Heart right ventricle (tissue), 16 donors: ENCODE measurements at regions of chr11 and their contacts with region 1.

Region 1: DNA sequence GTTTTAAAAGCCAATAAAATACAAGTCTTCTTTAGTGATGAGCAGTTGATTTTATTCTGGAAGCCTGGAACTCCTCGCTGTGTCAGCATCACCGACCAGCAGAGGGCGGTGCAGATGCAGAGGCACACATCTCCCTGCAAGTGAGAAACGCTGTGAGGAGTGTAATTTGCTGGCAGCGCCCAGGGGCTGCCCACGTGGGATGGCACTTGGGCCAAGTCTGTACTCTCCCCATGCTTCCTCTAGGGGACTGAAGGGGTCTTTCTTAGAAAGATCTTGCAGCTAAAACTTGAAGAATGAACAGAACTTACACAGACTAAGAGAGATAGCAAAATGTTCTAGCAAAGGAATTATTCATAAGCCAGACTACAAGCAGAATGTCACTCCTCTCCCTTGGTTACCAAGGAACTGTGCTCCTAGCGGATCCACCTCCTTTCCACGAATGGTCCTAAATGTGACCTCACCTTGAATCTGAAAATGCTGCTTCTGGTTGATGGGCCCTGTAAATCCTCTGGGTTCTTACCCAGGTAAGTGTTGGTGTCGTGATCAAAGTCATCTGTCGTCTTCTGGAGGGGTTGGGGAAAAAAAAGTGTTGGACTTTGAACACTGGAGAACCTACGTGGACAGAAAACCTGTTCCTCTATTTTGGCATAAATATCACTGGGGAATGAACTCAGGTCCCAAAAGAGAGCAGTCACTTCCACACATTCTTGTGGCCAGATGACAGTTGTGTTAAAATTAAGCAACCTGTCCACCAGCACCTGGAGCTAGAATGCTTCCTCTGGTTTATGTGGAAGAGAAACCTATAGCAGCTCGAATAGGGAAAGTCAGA is 31.8 kb downstream of the CNTF start:
- DNase-seq: peak; percentile 63 to 80
- ATAC-seq: peak; percentile 77 to 95 (median 86)
- H3K4me3 ChIP-seq: no peak overlapping the region
- H3K27ac ChIP-seq: no peak overlapping the region
- H3K4me1 ChIP-seq: peaks cover 0 to 30% (median 4%) of the 10 kb centered on the region in 9 donors
- H3K27me3 ChIP-seq: no peaks in the 10 kb centered on the region
- CTCF ChIP-seq: peak; percentile 79 to 94 (median 90)

Region 2: GRCh38 chr11:58222721-58223120 is 431.6 kb before region 1 on chr11:
- intact Hi-C with region 1: no loop called
- DNase-seq: no peak
- ATAC-seq: no peak
- H3K4me3 ChIP-seq: no peak overlapping the region
- H3K27ac ChIP-seq: no peak overlapping the region
- H3K4me1 ChIP-seq: no peaks in the 10 kb centered on the region
- H3K27me3 ChIP-seq: no peaks in the 10 kb centered on the region
- CTCF ChIP-seq: no peak

Region 3: GRCh38 chr11:58354727-58355126 is 299.6 kb before region 1 on chr11:
- intact Hi-C with region 1: no loop called
- DNase-seq: no peak
- ATAC-seq: no peak
- H3K4me3 ChIP-seq: no peak overlapping the region
- H3K27ac ChIP-seq: no peak overlapping the region
- H3K4me1 ChIP-seq: no peaks in the 10 kb centered on the region
- H3K27me3 ChIP-seq: no peaks in the 10 kb centered on the region
- CTCF ChIP-seq: no peak

Region 4: GRCh38 chr11:58616594-58616993 is 37.7 kb before region 1 on chr11:
- intact Hi-C with region 1: no loop called
- DNase-seq: peak in 1 of 2 donors; percentile 30
- ATAC-seq: peak in 6 of 8 donors; percentile 43 to 85 (median 52)
- H3K4me3 ChIP-seq: no peak overlapping the region
- H3K27ac ChIP-seq: peak overlapping the region in 2 of 10 donors; percentile 5 to 68
- H3K4me1 ChIP-seq: peaks cover 5 to 37% (median 21%) of the 10 kb centered on the region in 9 donors
- H3K27me3 ChIP-seq: no peaks in the 10 kb centered on the region
- CTCF ChIP-seq: no peak

Region 5: GRCh38 chr11:58675334-58676155 is 21.3 kb after region 1 on chr11:
- intact Hi-C with region 1: loop called in 1 of 10 experiments (anchors 2 kb)
- DNase-seq: peak; percentile 62 to 81
- ATAC-seq: peak; percentile 83 to 94 (median 90)
- H3K4me3 ChIP-seq: no peak overlapping the region
- H3K27ac ChIP-seq: no peak overlapping the region
- H3K4me1 ChIP-seq: no peaks in the 10 kb centered on the region
- H3K27me3 ChIP-seq: peaks cover 0 to 24% (median 14%) of the 10 kb centered on the region in 7 donors
- CTCF ChIP-seq: peak; percentile 73 to 97 (median 94)

Region 6: DNA sequence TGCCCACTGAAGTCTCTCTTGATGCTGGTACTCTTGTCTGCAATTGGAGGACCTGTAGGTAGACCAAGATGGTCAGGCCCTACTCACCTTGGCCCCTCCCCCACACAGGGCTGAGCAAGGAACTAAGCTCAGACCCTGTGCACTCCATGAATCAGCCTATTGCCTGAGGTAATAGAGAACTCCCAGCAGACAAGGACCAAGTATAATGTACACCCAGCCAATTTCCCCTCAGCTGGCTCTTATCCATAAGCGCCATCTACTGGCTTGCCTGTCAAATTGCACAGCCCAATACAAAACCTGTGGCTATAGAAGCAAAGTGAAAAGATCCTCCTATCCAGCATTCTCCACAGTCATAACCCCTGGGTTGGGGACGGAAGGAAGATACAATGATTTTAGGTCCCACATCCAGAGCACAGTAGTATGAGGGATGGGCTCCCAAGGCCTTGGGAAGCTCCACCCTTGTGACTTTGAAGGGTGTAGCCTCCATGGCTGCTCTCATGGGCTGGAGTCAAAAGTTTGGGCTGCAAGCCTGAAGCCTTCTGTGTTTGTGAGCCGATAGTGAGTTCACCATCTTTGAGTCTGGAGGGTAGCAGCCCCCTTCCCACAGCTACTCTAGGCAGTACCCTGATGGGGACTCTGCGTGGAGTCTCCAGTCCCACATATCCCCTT is 134.2 kb after region 1 on chr11:
- intact Hi-C with region 1: loop called in 2 of 10 experiments (anchors 5 to 10 kb)
- DNase-seq: peak in 1 of 2 donors; percentile 8
- ATAC-seq: peak in 7 of 8 donors; percentile 34 to 76 (median 53)
- H3K4me3 ChIP-seq: no peak overlapping the region
- H3K27ac ChIP-seq: no peak overlapping the region
- H3K4me1 ChIP-seq: no peaks in the 10 kb centered on the region
- H3K27me3 ChIP-seq: peaks cover 0 to 14% (median 0%) of the 10 kb centered on the region in 7 donors
- CTCF ChIP-seq: peak; percentile 31 to 79 (median 63)

Region 7: DNA sequence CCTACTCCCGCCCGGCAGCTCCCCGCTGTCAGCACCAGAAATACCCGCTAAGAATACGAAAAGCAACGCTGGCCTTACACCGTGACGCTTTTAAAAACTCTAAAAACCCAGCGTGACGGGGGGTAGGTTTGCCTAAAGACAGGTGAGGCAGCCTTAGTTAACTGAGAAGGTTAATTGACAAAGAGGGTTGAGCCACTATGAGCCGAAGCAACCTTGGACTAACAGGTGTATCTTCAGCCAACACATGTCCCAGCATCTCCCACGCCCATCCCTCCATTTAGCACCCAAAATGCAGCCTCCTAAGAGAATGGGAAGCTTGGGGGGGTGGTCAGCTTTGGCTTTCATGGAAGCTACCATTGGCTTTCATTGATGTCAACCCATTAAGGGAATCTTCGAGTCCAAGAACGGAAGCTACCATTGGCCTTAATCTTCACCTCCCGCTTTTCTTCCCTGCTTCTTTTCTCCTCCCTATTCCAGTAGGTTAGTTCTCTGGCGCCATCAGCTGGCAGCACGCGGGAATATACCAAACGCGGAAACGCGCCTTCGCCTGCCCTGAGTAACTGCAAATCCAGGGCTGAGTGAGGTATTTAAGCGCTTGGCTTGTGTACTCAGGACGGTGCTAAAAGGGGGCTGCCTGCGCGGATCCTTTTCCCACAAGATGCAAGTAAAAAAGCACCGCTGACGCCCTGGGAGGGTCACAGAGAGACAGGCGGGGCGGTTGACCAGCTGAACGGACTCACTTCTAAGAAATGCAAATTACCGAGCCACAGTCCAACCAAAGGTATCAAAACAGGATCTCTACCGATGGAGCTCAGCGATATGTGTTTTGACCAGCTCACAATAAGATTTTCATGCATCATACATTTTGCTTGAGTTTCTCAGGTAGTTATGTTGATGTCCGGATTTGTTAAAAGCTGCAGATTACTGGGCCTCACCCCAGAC is 246.5 kb after region 1 on chr11:
- intact Hi-C with region 1: loop called in 3 of 10 experiments (anchors 10 kb)
- DNase-seq: peak; percentile 57 to 64
- ATAC-seq: peak in 5 of 8 donors; percentile 28 to 74 (median 55)
- H3K4me3 ChIP-seq: no peak overlapping the region
- H3K27ac ChIP-seq: no peak overlapping the region
- H3K4me1 ChIP-seq: peaks cover 0 to 9% (median 0%) of the 10 kb centered on the region in 9 donors
- H3K27me3 ChIP-seq: peaks cover 0 to 67% (median 50%) of the 10 kb centered on the region in 7 donors
- CTCF ChIP-seq: peak in 8 of 9 donors; percentile 19 to 58 (median 50)

Region 8: DNA sequence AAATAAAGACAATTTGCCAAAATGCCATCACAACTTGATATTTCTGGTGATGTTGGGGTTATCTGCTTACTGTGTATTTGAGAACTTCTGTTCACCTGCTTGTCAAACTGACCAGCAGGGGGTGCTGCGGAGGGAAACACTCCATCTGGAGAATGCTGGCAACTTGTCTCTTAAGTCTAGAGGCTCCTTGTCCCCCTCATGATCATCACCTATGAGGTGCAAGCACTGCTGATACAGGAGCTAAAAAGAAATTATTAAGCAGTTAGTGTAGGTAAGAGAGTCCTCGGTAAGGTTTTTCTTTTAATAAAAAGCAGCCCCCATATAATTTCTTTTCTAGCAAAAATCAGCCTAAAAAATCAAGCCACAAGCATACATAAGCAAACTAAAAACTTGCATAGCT is 399.1 kb after region 1 on chr11:
- intact Hi-C with region 1: loop called in 1 of 10 experiments (anchors 10 kb)
- DNase-seq: peak; percentile 51 to 57
- ATAC-seq: no peak
- H3K4me3 ChIP-seq: no peak overlapping the region
- H3K27ac ChIP-seq: no peak overlapping the region
- H3K4me1 ChIP-seq: peaks cover 0 to 3% (median 0%) of the 10 kb centered on the region in 9 donors
- H3K27me3 ChIP-seq: peaks cover 0 to 38% (median 19%) of the 10 kb centered on the region in 7 donors
- CTCF ChIP-seq: peak; percentile 25 to 85 (median 69)

Region 9: DNA sequence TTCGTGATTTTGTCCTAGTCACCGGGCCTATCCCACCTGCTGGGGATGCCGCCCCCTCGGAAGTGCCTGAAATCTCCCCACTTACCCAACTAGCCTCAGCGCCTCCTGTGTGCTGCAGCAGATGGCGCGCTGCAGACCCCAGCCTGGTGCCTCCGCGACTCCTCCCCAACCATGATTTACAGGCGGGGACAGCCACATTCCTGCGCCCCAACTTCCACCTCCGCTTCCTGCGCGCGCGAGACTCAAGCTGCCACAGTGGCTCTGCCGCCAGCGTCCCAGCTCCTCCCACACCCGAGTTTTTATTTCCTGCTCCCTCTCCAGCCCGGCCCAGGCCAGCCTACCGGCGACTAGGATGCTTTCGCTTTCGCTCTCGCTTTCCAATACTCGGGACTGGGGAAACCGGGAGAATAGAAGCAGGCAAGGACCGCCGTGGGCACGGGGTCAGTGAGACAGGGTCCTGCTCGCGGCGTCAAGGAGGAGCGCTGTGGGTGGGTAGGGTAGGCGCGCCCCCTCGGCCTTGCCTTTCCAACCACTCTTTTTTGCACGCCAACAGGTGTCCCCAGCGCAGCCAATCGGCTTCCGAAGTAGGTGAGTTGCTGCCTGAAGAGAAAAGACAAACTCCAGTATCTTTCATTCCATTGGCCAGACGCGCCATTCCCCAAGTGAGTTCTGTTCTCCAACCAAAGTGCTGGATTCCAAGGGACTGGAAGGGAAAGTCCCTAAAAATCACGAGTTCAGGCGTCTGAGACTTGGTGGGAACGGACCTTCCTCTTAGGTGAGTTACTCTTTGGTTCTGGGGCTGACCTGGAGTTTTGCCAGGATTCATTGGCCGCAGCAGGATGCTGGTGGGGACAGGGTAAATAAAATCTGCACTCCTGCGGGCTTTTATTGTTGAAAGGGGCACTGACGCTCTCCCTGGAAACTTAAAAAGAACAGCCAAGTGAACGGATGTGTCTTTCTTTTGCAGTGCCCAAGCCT is 488.5 kb after region 1 on chr11 and contains the start of gene FAM111A:
- intact Hi-C with region 1: loop called in 1 of 10 experiments (anchors 10 kb)
- DNase-seq: peak; percentile 86 to 90
- ATAC-seq: peak; percentile 93 to 97 (median 96)
- H3K4me3 ChIP-seq: peak within 1 kb of the TSS; percentile 20 to 86 (median 70)
- H3K27ac ChIP-seq: peak within 1 kb of the TSS; percentile 44 to 94 (median 87)
- H3K4me1 ChIP-seq: peaks cover 0 to 48% (median 25%) of the 10 kb centered on the region in 9 donors
- H3K27me3 ChIP-seq: no peaks in the 10 kb centered on the region
- CTCF ChIP-seq: peak in 6 of 9 donors; percentile 5 to 52 (median 26)
- total RNA-seq, gene FAM111A: 4.0 to 18.6 (median 5.1) TPM

Region 10: GRCh38 chr11:59158206-59159068 is 504.1 kb after region 1 on chr11:
- intact Hi-C with region 1: loop called in 2 of 10 experiments (anchors 10 kb)
- DNase-seq: peak in 1 of 2 donors; percentile 54
- ATAC-seq: peak; percentile 55 to 92 (median 88)
- H3K4me3 ChIP-seq: no peak overlapping the region
- H3K27ac ChIP-seq: no peak overlapping the region
- H3K4me1 ChIP-seq: peaks cover 0 to 10% (median 0%) of the 10 kb centered on the region in 9 donors
- H3K27me3 ChIP-seq: peaks cover 0 to 5% (median 0%) of the 10 kb centered on the region in 7 donors
- CTCF ChIP-seq: peak; percentile 60 to 88 (median 81)